ENCODE measurements at regions of chr20 and their contacts with region 1.

Region 1: GRCh38 chr20:4726710-4727397 is 5.1 kb downstream of the PRND start:
- DNase-seq: peak; percentile 62
- H3K4me3 Mint-ChIP-seq: peak overlapping the region; percentile 19
- H3K27ac Mint-ChIP-seq: no peak overlapping the region
- H3K4me1 Mint-ChIP-seq: peaks cover 12% of the 10 kb centered on the region
- H3K27me3 Mint-ChIP-seq: peaks cover 5% of the 10 kb centered on the region

Region 2: DNA sequence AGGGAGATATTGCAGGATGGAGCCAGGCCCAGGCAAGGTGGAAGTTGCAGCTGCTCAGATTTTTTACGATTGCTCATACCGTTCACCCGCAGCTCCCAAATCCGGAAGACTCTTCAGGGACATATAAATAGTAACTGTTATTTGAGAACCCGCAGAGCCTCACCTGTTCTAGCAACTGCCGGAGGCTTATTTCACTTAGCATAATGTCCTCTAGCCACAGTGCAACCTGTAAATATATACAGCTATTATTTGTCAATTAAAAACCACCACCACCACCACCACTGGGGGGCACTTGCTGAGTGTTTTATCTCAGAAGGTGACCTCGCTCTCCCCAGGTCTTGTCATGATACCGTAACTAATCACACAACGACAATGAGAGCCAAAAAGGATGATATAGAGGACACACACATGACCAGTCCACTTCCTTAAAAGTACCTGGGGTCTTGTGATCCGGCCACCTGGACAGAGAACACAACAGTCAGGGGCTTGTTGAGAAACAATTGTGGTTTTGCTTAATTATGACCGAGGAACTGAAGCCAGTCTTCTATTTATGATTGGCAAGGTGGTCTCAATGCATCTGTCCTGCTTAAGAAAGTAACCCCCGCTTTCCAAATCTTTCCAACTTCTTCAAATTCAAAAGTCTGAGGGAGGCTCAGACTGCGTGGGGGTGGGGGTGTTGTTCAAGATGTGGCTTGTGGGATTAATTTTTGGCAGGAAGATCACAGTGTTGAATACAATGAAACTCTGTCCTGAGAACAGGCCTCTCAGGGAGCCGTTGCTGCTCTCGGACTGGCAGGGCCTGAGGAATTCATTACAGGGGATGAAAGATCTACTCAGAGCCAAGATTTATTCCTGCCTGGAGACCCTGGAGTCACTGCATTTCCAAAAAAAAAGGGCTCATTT is 112.9 kb before region 1 on chr20:
- CTCF ChIA-PET with region 1: interaction called, 50 read pairs
- POLR2A ChIA-PET with region 1: no interaction called
- DNase-seq: peak; percentile 83
- H3K4me3 Mint-ChIP-seq: no peak overlapping the region
- H3K27ac Mint-ChIP-seq: no peak overlapping the region
- H3K4me1 Mint-ChIP-seq: peaks cover 10% of the 10 kb centered on the region
- H3K27me3 Mint-ChIP-seq: peaks cover 7% of the 10 kb centered on the region

Region 3: GRCh38 chr20:4748847-4749246 is 22.0 kb after region 1 on chr20:
- CTCF ChIA-PET with region 1: no interaction called
- POLR2A ChIA-PET with region 1: no interaction called
- DNase-seq: no peak
- H3K4me3 Mint-ChIP-seq: no peak overlapping the region
- H3K27ac Mint-ChIP-seq: no peak overlapping the region
- H3K4me1 Mint-ChIP-seq: peaks cover 2% of the 10 kb centered on the region
- H3K27me3 Mint-ChIP-seq: peaks cover 18% of the 10 kb centered on the region